ENCODE measurements at regions of chr9 and their contacts with region 1.

Region 1: DNA sequence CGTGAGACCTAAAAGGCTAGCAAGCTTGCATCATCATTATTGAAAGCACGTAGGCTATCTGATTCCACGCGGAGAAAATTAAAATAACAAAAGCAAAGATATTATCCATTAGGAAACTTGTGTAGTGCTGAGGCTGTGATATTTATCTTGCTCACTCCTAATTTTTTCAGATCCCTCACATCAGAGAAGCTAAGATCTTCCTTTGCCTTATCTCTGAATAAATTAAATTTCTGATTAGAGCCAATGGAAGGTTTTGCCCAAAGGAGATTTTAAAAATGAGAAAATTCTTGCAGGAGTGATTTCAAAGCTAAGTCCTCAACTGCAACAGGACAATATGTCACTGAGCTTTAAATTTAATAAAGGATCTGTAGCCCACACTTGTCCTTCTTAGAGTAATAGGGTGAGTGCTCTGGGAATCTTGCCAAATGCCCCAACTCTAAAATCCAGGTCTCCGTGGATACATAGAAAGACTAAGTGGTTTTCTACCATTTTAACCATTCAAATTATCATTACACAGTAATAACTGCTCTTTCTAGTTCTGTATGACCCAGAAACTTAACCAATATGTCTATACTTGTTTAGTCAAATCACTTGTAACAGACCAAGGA is 295.0 kb downstream of the CAAP1 start:
- DNase-seq: no peak
- ATAC-seq: no peak
- H3K4me3 ChIP-seq: no peak overlapping the region
- H3K27ac ChIP-seq: no peak overlapping the region
- H3K4me1 ChIP-seq: no peaks in the 10 kb centered on the region
- H3K27me3 ChIP-seq: no peaks in the 10 kb centered on the region
- CTCF ChIP-seq: no peak

Region 2: DNA sequence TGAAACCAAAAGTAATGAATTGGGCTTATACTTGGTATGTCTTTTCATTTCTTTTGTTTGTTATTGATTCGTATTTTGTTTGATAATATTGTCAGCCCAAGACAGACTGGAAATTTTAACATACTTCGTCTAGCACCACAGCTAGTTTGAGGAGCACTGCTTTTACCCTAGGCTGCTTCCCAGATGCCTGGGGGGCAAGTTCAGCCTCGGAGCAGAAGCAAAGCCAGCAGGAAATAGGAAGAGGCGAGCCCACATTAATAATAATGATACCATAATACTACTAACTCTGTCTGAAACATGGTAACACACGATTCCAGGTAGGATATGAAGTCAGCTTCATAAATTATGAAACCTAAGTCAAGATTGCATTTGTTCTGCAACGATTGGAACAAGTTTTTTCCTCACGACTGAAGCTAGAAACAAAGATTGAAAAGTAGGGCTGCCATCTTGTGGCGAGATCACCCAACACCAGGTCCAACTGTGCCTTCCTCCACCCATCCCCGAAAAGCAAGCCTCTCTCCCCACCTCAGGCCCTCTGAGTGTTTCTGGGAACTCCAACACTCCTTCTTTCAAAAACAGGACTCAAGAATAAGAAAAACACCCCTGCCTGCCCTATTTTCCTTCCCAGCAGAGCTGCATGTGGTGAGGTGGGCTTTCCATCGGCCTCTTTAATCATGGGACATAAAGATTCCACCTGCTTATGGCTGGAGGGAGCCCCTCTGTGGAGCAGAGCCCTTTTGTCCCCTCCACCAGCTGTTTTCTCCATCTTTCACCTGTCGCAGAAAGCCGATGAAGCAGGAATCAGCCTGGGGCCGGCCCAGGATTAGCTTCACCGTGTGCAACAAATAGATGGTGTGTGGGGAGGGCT is 58.6 kb after region 1 on chr9:
- intact Hi-C with region 1: loop called in 1 of 2 experiments (anchors 10 kb)
- DNase-seq: no peak
- ATAC-seq: no peak
- H3K4me3 ChIP-seq: no peak overlapping the region
- H3K27ac ChIP-seq: no peak overlapping the region
- H3K4me1 ChIP-seq: no peaks in the 10 kb centered on the region
- H3K27me3 ChIP-seq: no peaks in the 10 kb centered on the region
- CTCF ChIP-seq: no peak

Region 3: GRCh38 chr9:26669666-26670352 is 72.2 kb after region 1 on chr9:
- intact Hi-C with region 1: no loop called
- DNase-seq: no peak
- ATAC-seq: no peak
- H3K4me3 ChIP-seq: no peak overlapping the region
- H3K27ac ChIP-seq: no peak overlapping the region
- H3K4me1 ChIP-seq: no peaks in the 10 kb centered on the region
- H3K27me3 ChIP-seq: no peaks in the 10 kb centered on the region
- CTCF ChIP-seq: no peak

Measured in psoas muscle (tissue), 8 donors.